ENCODE measurements at regions of chr2 and their contacts with region 1.

Region 1: GRCh38 chr2:45494269-45494977 is 116.6 kb downstream of the SRBD1 start:
- DNase-seq: no peak
- H3K4me3 Mint-ChIP-seq: no peak overlapping the region
- H3K27ac Mint-ChIP-seq: no peak overlapping the region
- H3K4me1 Mint-ChIP-seq: peaks cover 17% of the 10 kb centered on the region
- H3K27me3 Mint-ChIP-seq: no peaks in the 10 kb centered on the region

Region 2: DNA sequence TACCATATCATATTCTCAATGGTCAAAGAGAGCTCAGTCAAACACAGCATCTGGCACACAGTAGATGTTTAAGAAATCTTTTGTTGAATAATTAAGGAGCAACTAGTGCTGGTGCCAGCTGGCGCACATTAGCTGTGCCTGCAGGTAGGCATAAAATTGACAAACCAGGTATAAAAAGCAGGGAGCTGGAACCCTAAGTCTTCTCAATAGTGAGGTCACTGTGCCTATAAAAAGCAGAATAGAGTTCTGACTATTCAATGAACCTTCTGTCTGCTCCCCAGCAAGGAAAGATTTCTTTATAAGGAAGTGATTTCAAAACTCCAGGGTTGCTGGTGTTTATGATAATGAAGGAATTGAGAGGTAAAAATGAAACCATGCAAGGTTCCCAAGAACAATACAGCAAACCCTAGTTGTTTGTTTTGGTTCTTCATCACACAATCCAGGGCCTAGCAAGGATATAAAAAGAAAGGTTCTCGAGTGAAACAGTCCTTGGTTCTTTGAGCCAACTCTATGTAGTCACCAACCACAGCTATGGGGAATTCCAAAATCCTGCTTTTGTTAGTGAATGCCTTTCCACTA is 1974.7 kb before region 1 on chr2:
- intact Hi-C with region 1: no loop called
- DNase-seq: no peak
- H3K4me3 Mint-ChIP-seq: no peak overlapping the region
- H3K27ac Mint-ChIP-seq: peak overlapping the region; percentile 6
- H3K4me1 Mint-ChIP-seq: peaks cover 26% of the 10 kb centered on the region
- H3K27me3 Mint-ChIP-seq: no peaks in the 10 kb centered on the region

Region 3: GRCh38 chr2:44578421-44579135 is 915.8 kb before region 1 on chr2:
- intact Hi-C with region 1: loop called (anchors 5 kb)
- DNase-seq: no peak
- H3K4me3 Mint-ChIP-seq: peak overlapping the region; percentile 24
- H3K27ac Mint-ChIP-seq: peak overlapping the region; percentile 76
- H3K4me1 Mint-ChIP-seq: peaks cover 29% of the 10 kb centered on the region
- H3K27me3 Mint-ChIP-seq: no peaks in the 10 kb centered on the region

Region 4: GRCh38 chr2:44981136-44982108 is 513.0 kb before region 1 on chr2:
- intact Hi-C with region 1: loop called (anchors 1 kb)
- DNase-seq: peak; percentile 31
- H3K4me3 Mint-ChIP-seq: no peak overlapping the region
- H3K27ac Mint-ChIP-seq: no peak overlapping the region
- H3K4me1 Mint-ChIP-seq: peaks cover 6% of the 10 kb centered on the region
- H3K27me3 Mint-ChIP-seq: peaks cover 26% of the 10 kb centered on the region

Region 5: GRCh38 chr2:45169339-45170190 is 324.9 kb before region 1 on chr2:
- intact Hi-C with region 1: loop called (anchors 10 kb)
- DNase-seq: no peak
- H3K4me3 Mint-ChIP-seq: no peak overlapping the region
- H3K27ac Mint-ChIP-seq: no peak overlapping the region
- H3K4me1 Mint-ChIP-seq: peaks cover 5% of the 10 kb centered on the region
- H3K27me3 Mint-ChIP-seq: peaks cover 69% of the 10 kb centered on the region

Region 6: DNA sequence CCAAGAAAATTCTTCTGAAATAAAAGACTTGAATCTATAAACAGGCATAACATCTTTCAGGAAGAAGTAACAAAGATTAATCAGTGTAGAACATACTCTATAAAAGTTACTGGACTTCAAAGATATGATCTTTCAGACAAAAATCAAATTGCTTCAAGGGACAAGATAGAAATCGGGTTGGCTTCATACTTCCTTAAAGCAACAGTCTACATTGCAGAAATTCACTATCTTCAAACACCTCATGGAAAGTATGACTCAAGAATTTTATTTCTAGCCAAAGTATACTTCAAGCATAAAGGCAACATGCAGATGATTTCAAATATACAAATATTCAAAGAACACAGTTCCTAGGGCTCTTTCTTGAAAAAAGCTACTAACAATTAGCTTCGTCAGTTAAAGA is 124.1 kb before region 1 on chr2:
- intact Hi-C with region 1: no loop called
- DNase-seq: no peak
- H3K4me3 Mint-ChIP-seq: no peak overlapping the region
- H3K27ac Mint-ChIP-seq: no peak overlapping the region
- H3K4me1 Mint-ChIP-seq: no peaks in the 10 kb centered on the region
- H3K27me3 Mint-ChIP-seq: peaks cover 4% of the 10 kb centered on the region

Region 7: DNA sequence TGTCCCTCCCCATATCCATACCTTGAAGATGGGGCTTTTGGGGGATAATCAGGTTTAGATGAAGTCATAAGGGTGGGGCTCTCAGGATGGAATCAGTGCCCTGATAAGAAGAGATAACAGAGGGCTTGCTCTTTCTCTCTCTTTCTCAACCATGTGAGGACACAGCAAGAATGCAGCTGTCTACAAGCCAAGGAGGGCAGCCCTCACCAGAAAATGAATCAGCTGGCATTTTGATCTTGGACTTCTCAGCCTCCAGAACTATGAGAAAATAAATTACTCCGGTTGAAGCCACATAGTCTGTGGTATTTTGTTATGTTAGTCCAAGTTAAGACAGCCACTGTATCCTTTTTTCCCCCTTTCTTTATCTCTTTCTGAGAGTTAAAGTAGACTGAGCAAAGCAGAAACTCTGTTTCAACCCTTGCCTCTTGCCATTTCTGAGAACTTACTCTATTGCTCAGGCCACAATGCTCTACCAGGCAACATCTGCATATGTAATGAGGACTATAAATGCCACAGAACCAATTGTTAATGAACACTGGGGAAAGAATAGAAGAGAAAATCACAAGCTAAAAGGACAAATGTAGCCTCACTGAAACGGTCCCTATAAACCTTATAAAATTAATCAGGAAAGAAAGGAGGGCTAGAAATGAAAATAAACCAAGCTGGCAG is 59.8 kb after region 1 on chr2:
- intact Hi-C with region 1: loop called (anchors 1 kb)
- DNase-seq: no peak
- H3K4me3 Mint-ChIP-seq: no peak overlapping the region
- H3K27ac Mint-ChIP-seq: peak overlapping the region; percentile 13
- H3K4me1 Mint-ChIP-seq: peaks cover 23% of the 10 kb centered on the region
- H3K27me3 Mint-ChIP-seq: no peaks in the 10 kb centered on the region

Region 8: DNA sequence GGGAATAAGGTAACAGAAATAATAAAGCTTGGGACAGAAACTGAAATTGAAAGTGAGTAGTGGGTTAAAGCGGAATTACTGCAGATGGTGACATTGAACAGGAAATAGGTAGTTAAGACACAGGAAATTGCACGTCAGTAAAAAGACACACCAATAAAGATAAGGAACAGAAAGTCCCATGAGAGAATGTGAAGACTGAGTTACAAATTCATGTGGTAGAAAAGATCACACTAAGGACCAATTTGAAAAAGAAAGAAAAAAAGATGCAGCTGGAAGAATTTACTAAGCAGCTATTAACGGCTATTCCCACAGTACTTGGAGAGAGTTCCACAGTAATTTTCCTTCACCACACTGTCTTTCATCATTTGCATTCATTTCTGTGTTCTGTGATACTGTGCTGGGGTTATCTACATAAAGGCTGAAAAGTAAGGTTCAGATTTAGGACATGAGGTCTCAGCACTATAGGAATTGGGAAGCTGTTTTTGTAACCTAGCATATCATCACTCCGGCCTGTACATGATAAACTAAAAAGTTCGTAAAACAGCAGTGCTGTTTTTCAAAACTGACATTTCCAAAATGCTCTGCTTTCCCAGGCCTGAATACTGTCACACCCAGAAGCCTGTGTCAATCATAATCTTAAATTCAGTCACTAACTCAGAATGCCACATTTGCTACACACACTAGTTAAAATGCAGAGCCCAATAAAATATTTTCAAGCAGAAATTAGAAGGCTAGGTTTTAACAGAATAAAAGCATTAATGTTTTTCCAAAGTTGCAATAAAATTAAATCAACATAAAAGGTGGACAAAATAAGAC is 73.8 kb after region 1 on chr2:
- intact Hi-C with region 1: loop called (anchors 1 kb)
- DNase-seq: peak; percentile 10
- H3K4me3 Mint-ChIP-seq: peak overlapping the region; percentile 77
- H3K27ac Mint-ChIP-seq: peak overlapping the region; percentile 94
- H3K4me1 Mint-ChIP-seq: peaks cover 22% of the 10 kb centered on the region
- H3K27me3 Mint-ChIP-seq: no peaks in the 10 kb centered on the region